ENCODE measurements at regions of chr3 and their contacts with region 1.

Region 1: GRCh38 chr3:17233398-17233800 is 348.6 kb downstream of the PLCL2 start:
- DNase-seq: peak in 2 of 4 donors; percentile 11 to 32
- ATAC-seq: peak; percentile 90
- H3K4me3 ChIP-seq: no peak overlapping the region
- H3K27ac ChIP-seq: no peak overlapping the region
- H3K4me1 ChIP-seq: peaks cover 0 to 5% of the 10 kb centered on the region in 2 donors
- H3K27me3 ChIP-seq: no peaks in the 10 kb centered on the region
- CTCF ChIP-seq: peak; percentile 51 to 66

Region 2: GRCh38 chr3:16600780-16601539 is 632.4 kb before region 1 on chr3:
- intact Hi-C with region 1: loop called in 1 of 2 experiments (anchors 10 kb)
- DNase-seq: peak; percentile 73 to 89 (median 77)
- ATAC-seq: peak; percentile 82
- H3K4me3 ChIP-seq: no peak overlapping the region
- H3K27ac ChIP-seq: no peak overlapping the region
- H3K4me1 ChIP-seq: no peaks in the 10 kb centered on the region
- H3K27me3 ChIP-seq: no peaks in the 10 kb centered on the region
- CTCF ChIP-seq: peak; percentile 72 to 80

Region 3: DNA sequence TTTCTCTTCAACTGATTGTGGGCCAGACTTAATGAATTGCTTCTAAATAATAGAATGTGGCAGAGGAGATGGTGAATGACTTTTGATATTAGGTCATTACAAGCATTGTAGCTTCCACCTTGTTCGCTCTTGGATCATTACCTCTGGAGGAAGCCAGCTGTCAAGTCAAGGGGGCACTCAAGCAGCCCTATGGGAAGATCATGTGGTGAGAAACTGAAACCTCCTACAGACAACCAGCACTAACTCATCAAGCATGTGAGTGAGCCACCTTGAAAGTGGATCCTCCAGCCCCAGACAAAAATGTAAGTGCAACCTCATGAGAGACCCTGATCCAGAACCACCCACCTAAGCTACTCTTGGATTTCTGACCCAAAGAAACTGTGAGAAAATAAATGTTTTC is 618.8 kb after region 1 on chr3:
- intact Hi-C with region 1: no loop called
- DNase-seq: no peak
- ATAC-seq: no peak
- H3K4me3 ChIP-seq: no peak overlapping the region
- H3K27ac ChIP-seq: no peak overlapping the region
- H3K4me1 ChIP-seq: no peaks in the 10 kb centered on the region
- H3K27me3 ChIP-seq: no peaks in the 10 kb centered on the region
- CTCF ChIP-seq: no peak

Measured in left lung (tissue), 14 donors.